ENCODE measurements at regions of chr7 and their contacts with region 1.

Region 1: DNA sequence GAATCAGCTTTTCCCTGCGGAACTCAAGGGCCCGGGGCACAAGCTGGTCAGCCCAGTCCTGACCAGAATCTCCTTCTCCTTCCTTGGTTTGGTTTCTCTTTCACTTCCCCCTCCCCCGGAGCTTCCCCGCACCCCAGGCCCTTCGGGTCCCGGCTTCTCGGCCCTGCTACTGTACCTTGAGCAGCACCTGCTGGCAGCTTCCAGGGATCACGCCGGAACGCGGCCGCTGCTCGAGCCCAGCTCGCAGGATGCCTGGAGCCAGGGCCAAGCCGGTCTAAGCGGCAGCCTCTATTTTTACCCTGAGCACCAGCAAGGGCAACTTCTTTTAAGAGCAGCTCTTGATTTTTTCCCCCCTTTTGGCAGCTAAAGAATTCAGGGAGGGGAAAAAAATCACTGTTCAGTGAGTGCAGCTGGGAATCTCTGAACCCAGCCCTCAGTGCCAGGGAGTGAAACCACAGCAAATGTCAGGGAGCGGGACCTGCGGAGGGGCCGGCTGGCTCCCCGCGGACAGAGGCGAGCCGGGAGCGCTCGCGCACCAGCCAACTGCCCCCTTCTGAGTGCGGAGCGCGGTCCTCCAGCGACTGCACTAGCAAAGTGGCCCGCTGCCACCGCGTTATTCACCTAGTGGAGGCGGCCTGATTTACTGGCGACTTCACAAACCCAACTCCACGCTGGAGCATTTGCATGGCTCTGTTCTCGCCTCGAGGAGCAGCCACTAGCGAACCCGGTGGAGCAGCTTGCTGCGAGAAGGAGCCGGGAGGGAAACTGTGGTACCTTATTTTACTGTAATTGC is 2.4 kb upstream of the INHBA start:
- DNase-seq: peak; percentile 80 to 96
- H3K4me3 ChIP-seq: peak overlapping the region; percentile 54; the same call in 1 of the 2 replicates
- H3K27ac ChIP-seq: peak overlapping the region; percentile 53; the same call in 1 of the 2 replicates
- H3K4me1 ChIP-seq: peaks cover 43% of the 10 kb centered on the region
- H3K27me3 ChIP-seq: no peaks in the 10 kb centered on the region
- CTCF ChIP-seq: peak; percentile 97

Region 2: DNA sequence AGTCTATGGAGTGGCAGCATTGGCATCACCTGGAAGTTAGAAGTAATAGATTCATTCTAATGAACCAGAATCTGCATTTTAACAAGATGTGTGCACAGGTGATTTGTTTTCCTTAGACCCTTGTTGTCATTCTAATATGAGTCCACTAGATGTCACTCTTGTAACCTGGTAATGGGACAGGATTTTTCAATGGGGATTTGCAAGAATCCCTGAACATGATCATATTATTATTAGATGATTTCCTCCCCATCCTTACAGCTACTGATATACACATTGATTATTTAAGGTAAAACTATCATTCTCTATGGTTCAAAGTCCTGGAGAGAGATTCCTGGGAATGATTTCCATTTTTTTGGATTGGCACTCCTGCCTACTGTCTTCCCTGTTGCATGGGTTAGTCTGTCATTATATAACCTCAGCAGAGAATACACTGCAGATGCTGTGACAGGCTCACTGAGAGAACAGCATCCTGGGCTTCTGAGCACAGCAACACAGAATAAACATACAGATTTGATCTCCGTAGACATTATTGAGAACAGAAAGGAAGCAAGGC is 1375.6 kb before region 1 on chr7:
- CTCF ChIA-PET with region 1: interaction called, 5 read pairs
- POLR2A ChIA-PET with region 1: no interaction called
- intact Hi-C with region 1: loop called (anchors 1 kb)
- DNase-seq: peak; percentile 9 to 52
- H3K4me3 ChIP-seq: no peak overlapping the region
- H3K27ac ChIP-seq: no peak overlapping the region
- H3K4me1 ChIP-seq: no peaks in the 10 kb centered on the region; the same call in 1 of the 2 replicates
- H3K27me3 ChIP-seq: no peaks in the 10 kb centered on the region
- CTCF ChIP-seq: peak; percentile 98

Region 3: DNA sequence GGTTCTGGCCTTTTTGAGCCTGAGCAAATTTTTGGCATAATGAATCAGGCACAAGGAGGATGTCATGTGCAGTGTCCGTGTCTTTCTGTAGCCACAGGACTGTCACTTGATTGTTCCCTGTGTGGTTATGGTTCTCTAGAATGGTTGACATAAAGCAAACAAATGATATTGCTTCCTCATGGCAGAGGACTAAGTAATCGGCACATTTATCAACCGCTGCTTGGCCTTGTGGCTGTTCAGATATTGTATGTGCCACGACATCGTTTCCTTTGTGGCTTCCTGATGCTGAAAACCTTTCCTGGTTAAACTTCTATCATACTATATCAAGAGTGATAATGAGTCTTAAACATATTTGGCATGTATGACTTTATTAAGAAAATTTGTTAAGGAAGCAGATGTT is 971.7 kb before region 1 on chr7:
- CTCF ChIA-PET with region 1: no interaction called
- POLR2A ChIA-PET with region 1: interaction called, 3 read pairs
- intact Hi-C with region 1: loop called (anchors 5 kb)
- DNase-seq: peak; percentile 40 to 92
- H3K4me3 ChIP-seq: no peak overlapping the region
- H3K27ac ChIP-seq: peak overlapping the region; percentile 36
- H3K4me1 ChIP-seq: peaks cover 26% of the 10 kb centered on the region
- H3K27me3 ChIP-seq: no peaks in the 10 kb centered on the region
- CTCF ChIP-seq: no peak

Region 4: DNA sequence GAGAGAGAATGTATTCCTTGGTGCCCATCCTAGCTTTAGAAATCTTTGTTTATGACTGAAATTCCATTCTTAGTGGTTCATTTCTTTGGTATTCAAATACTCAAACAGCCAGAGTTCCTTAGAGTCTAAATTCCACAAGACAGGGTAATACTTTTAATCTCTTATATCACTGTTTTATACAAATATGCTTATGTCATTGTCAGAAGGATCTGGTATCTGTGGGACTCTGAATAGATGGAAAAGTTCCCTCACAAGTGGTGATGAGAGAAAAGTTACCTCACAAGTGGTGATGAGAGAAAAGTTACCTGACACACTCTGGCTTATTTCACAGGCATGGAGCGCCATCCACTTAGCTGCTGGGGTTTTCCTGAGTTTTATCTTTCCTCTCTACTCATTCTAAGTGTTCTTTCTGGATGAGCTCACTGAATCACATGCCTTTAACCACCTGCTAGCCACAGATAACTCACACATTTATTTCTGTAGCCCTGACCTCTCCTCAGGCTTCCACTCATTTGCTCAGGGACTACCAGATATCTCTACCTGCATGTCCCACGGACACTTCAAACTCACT is 786.5 kb before region 1 on chr7:
- CTCF ChIA-PET with region 1: no interaction called
- POLR2A ChIA-PET with region 1: interaction called, 3 read pairs
- intact Hi-C with region 1: loop called (anchors 1 kb)
- DNase-seq: peak; percentile 55 to 91
- H3K4me3 ChIP-seq: no peak overlapping the region
- H3K27ac ChIP-seq: peak overlapping the region; percentile 85
- H3K4me1 ChIP-seq: peaks cover 69% of the 10 kb centered on the region
- H3K27me3 ChIP-seq: no peaks in the 10 kb centered on the region
- CTCF ChIP-seq: no peak

Region 5: DNA sequence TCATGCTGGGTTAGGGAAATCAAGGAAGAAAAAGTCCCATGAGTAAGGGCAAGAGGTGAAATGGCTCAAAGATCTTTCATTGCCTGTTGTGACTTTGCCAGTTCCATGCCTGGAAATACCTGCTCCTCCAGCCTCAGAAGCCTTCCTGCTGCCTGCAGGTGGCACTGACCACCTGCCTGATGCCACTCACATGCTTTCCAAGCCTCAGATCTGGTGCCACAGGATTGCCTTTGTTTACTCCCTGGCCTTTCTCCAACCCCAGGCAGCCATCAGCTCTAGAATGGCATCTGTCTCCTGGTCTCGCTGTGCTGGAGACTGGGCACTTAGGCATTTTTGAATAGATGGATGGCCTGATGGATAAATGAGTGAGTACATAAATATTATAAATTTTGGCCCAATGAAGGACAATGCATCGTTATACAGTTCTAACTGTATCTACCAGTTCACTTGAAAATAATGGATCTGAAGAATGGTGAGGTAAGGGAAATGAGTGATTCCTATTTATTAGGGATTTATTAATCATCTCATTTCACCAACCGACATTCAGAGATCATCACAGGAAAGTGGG is 659.7 kb before region 1 on chr7:
- CTCF ChIA-PET with region 1: interaction called, 8 read pairs
- POLR2A ChIA-PET with region 1: no interaction called
- intact Hi-C with region 1: loop called (anchors 1 kb)
- DNase-seq: peak; percentile 73 to 80
- H3K4me3 ChIP-seq: no peak overlapping the region
- H3K27ac ChIP-seq: no peak overlapping the region
- H3K4me1 ChIP-seq: peaks cover 19% of the 10 kb centered on the region
- H3K27me3 ChIP-seq: no peaks in the 10 kb centered on the region
- CTCF ChIP-seq: peak; percentile 70

Region 6: GRCh38 chr7:41224063-41224806 is 481.1 kb before region 1 on chr7:
- CTCF ChIA-PET with region 1: no interaction called
- POLR2A ChIA-PET with region 1: no interaction called
- intact Hi-C with region 1: loop called (anchors 1 kb)
- DNase-seq: peak; percentile 54 to 100
- H3K4me3 ChIP-seq: no peak overlapping the region
- H3K27ac ChIP-seq: peak overlapping the region; percentile 73
- H3K4me1 ChIP-seq: peaks cover 23% of the 10 kb centered on the region
- H3K27me3 ChIP-seq: no peaks in the 10 kb centered on the region
- CTCF ChIP-seq: no peak

Region 7: GRCh38 chr7:41416208-41416595 is 289.1 kb before region 1 on chr7:
- CTCF ChIA-PET with region 1: interaction called, 10 read pairs
- POLR2A ChIA-PET with region 1: no interaction called
- intact Hi-C with region 1: no loop called
- DNase-seq: no peak
- H3K4me3 ChIP-seq: no peak overlapping the region
- H3K27ac ChIP-seq: no peak overlapping the region
- H3K4me1 ChIP-seq: no peaks in the 10 kb centered on the region
- H3K27me3 ChIP-seq: no peaks in the 10 kb centered on the region
- CTCF ChIP-seq: no peak

Region 8: DNA sequence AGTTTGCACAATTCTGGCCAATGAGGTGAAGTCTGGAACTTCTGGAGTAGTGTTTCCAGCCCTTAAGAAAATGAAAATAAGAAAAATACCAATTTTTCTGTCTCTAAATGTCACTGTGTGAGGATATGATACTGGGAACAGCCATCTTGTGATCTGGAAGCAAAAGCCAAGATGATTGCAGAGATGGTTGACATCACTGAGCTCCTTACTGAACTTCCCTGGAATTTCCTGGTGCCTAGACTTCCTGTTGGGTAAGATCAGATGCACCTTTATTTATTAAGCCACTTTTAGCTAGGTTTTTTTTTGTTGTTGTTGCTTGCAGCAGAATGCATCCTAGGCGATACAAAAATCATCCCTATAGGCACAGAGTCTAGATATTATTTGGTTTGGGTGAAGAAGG is 24.9 kb after region 1 on chr7:
- CTCF ChIA-PET with region 1: no interaction called
- POLR2A ChIA-PET with region 1: no interaction called
- intact Hi-C with region 1: no loop called
- DNase-seq: no peak
- H3K4me3 ChIP-seq: no peak overlapping the region
- H3K27ac ChIP-seq: no peak overlapping the region
- H3K4me1 ChIP-seq: no peaks in the 10 kb centered on the region
- H3K27me3 ChIP-seq: no peaks in the 10 kb centered on the region
- CTCF ChIP-seq: no peak

Measured in PC-9 (cell line).